HepG2 (cell line): ENCODE measurements at regions of chr2 and their contacts with region 1.

Region 1: DNA sequence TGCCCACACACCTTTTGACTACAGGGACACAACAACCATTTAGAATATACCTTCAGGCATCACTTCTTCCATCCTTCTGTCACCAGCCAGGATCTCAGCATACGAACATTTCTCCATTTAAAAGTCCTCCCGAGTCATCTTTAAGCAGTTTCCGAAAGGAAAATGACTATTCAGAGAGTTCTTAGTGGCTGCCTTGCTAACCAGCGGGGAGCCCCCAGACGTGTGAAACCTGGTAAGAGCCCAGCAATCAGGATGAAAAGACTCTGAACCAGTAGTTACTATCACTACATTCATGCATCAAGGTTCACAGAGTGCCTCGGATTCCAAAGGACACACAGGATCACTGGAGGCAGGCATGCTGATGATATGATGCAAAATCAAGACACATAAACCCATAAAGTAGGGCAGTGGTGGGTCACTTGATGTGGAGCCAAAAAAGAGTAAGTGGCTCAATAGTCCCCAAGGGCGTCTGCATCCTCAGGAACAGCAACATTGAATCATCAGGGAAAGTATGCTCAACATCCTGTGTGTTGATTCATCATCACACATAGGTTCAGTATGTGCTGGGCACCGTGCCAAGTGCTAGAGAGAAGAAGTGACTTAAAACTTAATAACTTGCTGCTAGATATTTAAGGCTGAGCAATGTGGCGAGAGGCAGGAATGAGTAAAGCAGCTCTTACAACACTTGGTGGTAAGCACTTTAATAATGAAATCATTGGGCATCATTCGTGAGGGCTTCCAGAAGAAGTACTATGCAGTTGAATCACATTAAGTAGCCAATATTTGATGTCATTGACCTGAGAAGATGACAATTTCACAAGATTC is 4.4 kb downstream of the CCL20 start:
- DNase-seq: peak; percentile 95
- ATAC-seq: peak; percentile 11
- H3K4me3 ChIP-seq: peak overlapping the region; percentile 22 to 92 (median 26); a peak in 5 of 6 replicates
- H3K27ac ChIP-seq: peak overlapping the region; percentile 94
- H3K4me1 ChIP-seq: peaks cover 76% of the 10 kb centered on the region
- H3K27me3 ChIP-seq: no peaks in the 10 kb centered on the region; a peak in 1 of 5 replicates
- CTCF ChIP-seq: no peak
- EP300 ChIP-seq: peak in 1 of 2 experiments; percentile 34; a peak in 2 of 4 replicates
- POLR2A ChIP-seq: peak; percentile 67 to 82
- RAD21 ChIP-seq: no peak; the same call in 1 of the 2 replicates

Region 2: DNA sequence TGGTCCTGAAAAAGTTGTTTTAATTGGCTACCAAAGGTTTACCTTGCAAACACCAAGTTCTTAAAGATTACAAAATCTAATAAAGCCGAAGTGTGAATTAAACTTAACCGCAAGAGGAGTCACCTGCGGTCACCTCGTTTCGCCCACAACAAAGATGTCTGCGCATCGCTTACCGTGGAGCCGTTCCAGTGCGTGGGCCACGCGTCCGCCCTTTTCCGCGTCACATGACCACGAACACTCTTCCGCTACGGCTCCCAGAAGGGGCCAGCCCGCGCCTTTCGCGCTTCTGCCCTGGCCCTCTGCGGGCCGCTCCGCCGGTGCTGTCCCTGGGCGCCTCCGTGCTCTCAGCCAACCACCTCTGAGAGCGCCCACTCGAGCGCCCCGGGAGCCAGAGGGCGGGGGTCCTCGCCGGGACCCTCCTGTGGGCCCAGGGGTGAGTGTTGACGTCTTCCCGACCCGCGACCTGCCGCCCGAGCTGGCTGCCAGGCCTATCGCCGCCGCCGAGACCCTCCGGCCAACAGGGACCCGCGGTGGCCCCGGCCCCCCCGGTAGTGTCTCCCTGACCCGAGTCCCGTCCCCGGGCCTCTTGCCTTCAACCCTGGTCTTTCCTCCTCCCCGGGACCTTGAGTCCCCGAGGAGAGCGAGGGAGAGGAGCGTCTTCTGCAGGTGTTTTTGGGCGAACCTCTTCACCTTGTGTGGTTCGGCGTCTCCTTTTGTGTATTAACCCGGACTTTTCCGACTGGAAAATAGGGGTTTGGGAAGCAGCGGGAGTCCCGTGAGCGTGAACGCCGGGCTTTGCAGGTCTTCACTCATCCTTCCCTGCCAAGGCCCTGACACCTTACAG is 492.8 kb before region 1 on chr2 and contains the start of gene MFF:
- CTCF ChIA-PET with region 1: no interaction called
- POLR2A ChIA-PET with region 1: no interaction called
- in situ Hi-C with region 1: no loop called
- intact Hi-C with region 1: loop called (anchors 5 kb)
- DNase-seq: peak; percentile 92
- ATAC-seq: peak; percentile 97
- H3K4me3 ChIP-seq: peak within 1 kb of the TSS; percentile 94 to 98 (median 96)
- H3K27ac ChIP-seq: peak within 1 kb of the TSS; percentile 87
- H3K4me1 ChIP-seq: peaks cover 37% of the 10 kb centered on the region
- H3K27me3 ChIP-seq: no peaks in the 10 kb centered on the region
- CTCF ChIP-seq: peak; percentile 56
- EP300 ChIP-seq: peak in 1 of 2 experiments; percentile 80
- POLR2A ChIP-seq: peak; percentile 77 to 86
- RAD21 ChIP-seq: peak; percentile 75
- total RNA-seq, gene MFF: 156 and 170 TPM in 2 replicates

Region 3: DNA sequence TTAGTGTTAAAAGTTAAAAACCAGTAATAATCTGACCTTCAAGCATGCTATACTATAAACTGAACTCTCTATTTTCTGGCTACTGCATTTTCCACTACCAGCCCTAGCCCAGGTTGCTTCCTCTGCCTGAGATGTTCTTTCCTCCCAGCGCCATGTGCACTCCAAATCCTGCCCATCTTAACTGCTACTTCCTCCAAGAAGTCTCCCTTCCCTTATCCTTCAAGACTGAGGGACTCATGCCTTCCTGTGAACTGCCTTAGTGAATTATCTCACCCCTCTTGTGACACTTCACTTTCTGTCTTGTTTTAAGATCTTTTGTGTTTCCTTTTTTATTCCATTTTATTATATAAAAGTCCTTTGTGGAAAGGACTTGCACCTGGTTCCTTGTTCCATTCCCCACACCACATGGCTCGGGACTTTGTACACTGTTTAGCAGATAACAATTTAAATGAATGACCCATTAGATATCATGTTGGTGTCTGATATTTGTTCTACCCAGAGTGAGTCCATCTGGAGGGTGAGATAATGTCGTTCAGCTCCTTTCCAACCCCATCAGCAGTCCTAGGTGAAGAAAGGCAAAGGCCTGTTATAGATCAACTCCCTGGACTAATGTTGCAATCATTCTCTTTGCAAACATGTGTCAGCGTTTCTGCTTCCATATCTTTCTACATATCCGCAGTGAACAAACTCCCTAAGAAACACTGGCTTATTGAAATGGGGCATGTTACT is 367.0 kb before region 1 on chr2:
- CTCF ChIA-PET with region 1: no interaction called
- POLR2A ChIA-PET with region 1: interaction called, 3 read pairs
- in situ Hi-C with region 1: no loop called
- intact Hi-C with region 1: loop called (anchors 5 kb)
- DNase-seq: peak; percentile 99
- ATAC-seq: peak; percentile 93
- H3K4me3 ChIP-seq: peak overlapping the region in 1 of 3 experiments; percentile 17; a peak in 1 of 6 replicates
- H3K27ac ChIP-seq: peak overlapping the region; percentile 90
- H3K4me1 ChIP-seq: peaks cover 84% of the 10 kb centered on the region
- H3K27me3 ChIP-seq: no peaks in the 10 kb centered on the region
- CTCF ChIP-seq: no peak
- EP300 ChIP-seq: peak; percentile 92 to 98
- POLR2A ChIP-seq: peak in 1 of 2 experiments; percentile 50; a peak in 1 of 4 replicates
- RAD21 ChIP-seq: no peak; the same call in 1 of the 2 replicates

Region 4: DNA sequence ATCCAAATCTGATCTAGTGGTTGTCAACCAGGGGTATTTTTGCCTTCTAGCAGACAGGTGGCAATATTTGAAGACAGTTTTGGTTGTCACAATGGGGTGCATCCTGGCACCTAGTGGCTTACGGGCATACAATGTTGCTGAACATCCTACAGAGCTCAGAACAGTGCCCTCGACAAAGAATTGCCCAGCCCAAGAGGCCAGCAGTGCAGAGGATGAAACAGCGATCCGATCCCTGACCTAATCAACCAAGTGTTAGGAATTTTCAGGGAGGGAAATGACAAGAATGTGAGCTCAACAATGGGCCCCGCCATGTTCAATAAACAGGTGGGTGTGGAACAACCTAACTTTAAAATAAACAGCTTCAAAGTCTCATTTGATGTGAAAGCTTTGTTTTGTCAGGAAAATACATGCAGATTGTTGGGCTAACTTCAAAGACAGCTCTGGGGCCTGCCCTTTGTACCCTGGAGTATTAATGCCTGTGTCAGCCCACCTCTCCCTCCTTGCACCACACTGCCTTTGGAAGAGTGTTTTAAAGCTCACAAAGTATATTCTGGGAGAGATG is 174.0 kb before region 1 on chr2:
- CTCF ChIA-PET with region 1: no interaction called
- POLR2A ChIA-PET with region 1: interaction called, 6 read pairs
- in situ Hi-C with region 1: no loop called
- intact Hi-C with region 1: loop called (anchors 5 kb)
- DNase-seq: peak; percentile 98
- ATAC-seq: peak; percentile 95
- H3K4me3 ChIP-seq: peak overlapping the region in 1 of 3 experiments; percentile 18; a peak in 1 of 6 replicates
- H3K27ac ChIP-seq: peak overlapping the region; percentile 61
- H3K4me1 ChIP-seq: peaks cover 38% of the 10 kb centered on the region
- H3K27me3 ChIP-seq: no peaks in the 10 kb centered on the region
- CTCF ChIP-seq: peak; percentile 26; the same call in 1 of the 2 replicates
- EP300 ChIP-seq: peak; percentile 60 to 96; a peak in 3 of 4 replicates
- POLR2A ChIP-seq: no peak
- RAD21 ChIP-seq: peak; percentile 30

Region 5: GRCh38 chr2:227796045-227796711 is 21.9 kb before region 1 on chr2:
- CTCF ChIA-PET with region 1: no interaction called
- POLR2A ChIA-PET with region 1: interaction called, 29 read pairs
- in situ Hi-C with region 1: no loop called
- intact Hi-C with region 1: loop called (anchors 2 kb)
- DNase-seq: peak; percentile 61
- ATAC-seq: peak; percentile 57
- H3K4me3 ChIP-seq: no peak overlapping the region
- H3K27ac ChIP-seq: no peak overlapping the region
- H3K4me1 ChIP-seq: peaks cover 48% of the 10 kb centered on the region
- H3K27me3 ChIP-seq: no peaks in the 10 kb centered on the region
- CTCF ChIP-seq: no peak
- EP300 ChIP-seq: no peak
- POLR2A ChIP-seq: no peak
- RAD21 ChIP-seq: no peak

Region 6: GRCh38 chr2:227828477-227828912 is 10.4 kb after region 1 on chr2:
- CTCF ChIA-PET with region 1: no interaction called
- POLR2A ChIA-PET with region 1: interaction called, 6 read pairs
- in situ Hi-C with region 1: no loop called
- intact Hi-C with region 1: loop called (anchors 1 kb)
- DNase-seq: peak; percentile 61
- ATAC-seq: peak; percentile 74
- H3K4me3 ChIP-seq: no peak overlapping the region
- H3K27ac ChIP-seq: no peak overlapping the region
- H3K4me1 ChIP-seq: peaks cover 37% of the 10 kb centered on the region
- H3K27me3 ChIP-seq: no peaks in the 10 kb centered on the region
- CTCF ChIP-seq: no peak
- EP300 ChIP-seq: 0 out of 4 replicates have a peak, but pooled peaks of 1 of the 2 experiments have one; percentile 43
- POLR2A ChIP-seq: no peak
- RAD21 ChIP-seq: no peak

Region 7: GRCh38 chr2:227884511-227884947 is 66.5 kb after region 1 on chr2:
- CTCF ChIA-PET with region 1: interaction called, 10 read pairs
- POLR2A ChIA-PET with region 1: no interaction called
- in situ Hi-C with region 1: no loop called
- intact Hi-C with region 1: loop called (anchors 1 kb)
- DNase-seq: peak; percentile 75
- ATAC-seq: peak; percentile 100
- H3K4me3 ChIP-seq: no peak overlapping the region; a peak in 1 of 6 replicates
- H3K27ac ChIP-seq: no peak overlapping the region
- H3K4me1 ChIP-seq: peaks cover 20% of the 10 kb centered on the region; the same call in 1 of the 2 replicates
- H3K27me3 ChIP-seq: no peaks in the 10 kb centered on the region; a peak in 1 of 5 replicates
- CTCF ChIP-seq: peak; percentile 99
- EP300 ChIP-seq: no peak
- POLR2A ChIP-seq: no peak
- RAD21 ChIP-seq: peak; percentile 80